HCT116 (cell line): ENCODE measurements at regions of chr3 and their contacts with region 1.

Region 1: DNA sequence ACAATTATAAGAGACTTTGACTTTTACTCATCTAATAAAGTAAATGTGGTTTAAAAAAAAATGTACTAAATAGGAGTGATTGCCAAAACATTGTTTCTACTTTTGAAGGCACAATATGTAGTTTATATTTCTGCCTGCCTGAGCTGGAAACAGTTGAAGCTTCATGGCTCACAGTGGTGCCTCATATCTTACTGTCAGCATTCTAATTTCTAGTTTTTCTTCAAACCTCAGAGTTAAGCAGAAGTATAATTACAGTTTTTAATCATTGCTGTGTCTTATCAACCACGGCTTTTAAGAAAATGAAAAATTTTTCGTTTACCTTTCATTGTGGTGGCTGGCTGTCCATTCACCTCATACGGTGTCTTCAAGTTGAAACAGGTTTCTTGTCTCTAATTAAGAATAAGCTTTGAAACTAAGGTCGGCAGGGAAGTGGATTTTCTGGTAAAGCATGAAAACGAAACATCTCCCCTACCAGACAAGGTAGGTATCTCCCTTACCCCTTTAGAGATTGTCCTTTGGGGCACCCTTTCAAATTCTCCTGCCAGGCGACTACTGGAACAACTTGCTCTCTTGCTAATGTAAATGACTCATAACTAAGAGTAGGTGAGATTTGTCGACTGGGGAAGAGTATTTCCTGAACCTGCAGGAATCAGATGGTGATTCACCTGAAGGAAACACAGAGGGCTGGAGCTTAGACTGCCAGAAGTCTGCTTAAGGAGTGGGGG is at the start of gene GPR87:
- DNase-seq: peak; percentile 88
- ATAC-seq: peak; percentile 97
- H3K4me3 ChIP-seq: peak within 1 kb of the TSS; percentile 25 to 53
- H3K27ac ChIP-seq: peak within 1 kb of the TSS; percentile 66; the same call in 1 of the 2 replicates
- H3K4me1 ChIP-seq: peaks cover 44 to 52% of the 10 kb centered on the region in 2 experiments
- H3K27me3 ChIP-seq: no peaks in the 10 kb centered on the region
- CTCF ChIP-seq: no peak
- POLR2A ChIP-seq: no peak
- RAD21 ChIP-seq: peak; percentile 13; the same call in 1 of the 2 replicates
- total RNA-seq, gene GPR87: 3.8 TPM

Region 2: GRCh38 chr3:151327571-151328198 is 11.3 kb after region 1 on chr3:
- CTCF ChIA-PET with region 1: interaction called, 10 read pairs
- POLR2A ChIA-PET with region 1: no interaction called
- RAD21 ChIA-PET with region 1: no interaction called
- intact Hi-C with region 1: no loop called
- DNase-seq: no peak
- ATAC-seq: peak; percentile 60
- H3K4me3 ChIP-seq: no peak overlapping the region
- H3K27ac ChIP-seq: no peak overlapping the region
- H3K4me1 ChIP-seq: peaks cover 15 to 22% of the 10 kb centered on the region in 2 experiments
- H3K27me3 ChIP-seq: no peaks in the 10 kb centered on the region
- CTCF ChIP-seq: peak; percentile 43 to 73 (median 63); a peak in 4 of 6 replicates
- POLR2A ChIP-seq: no peak
- RAD21 ChIP-seq: peak; percentile 66

Region 3: GRCh38 chr3:152128356-152128755 is 811.9 kb after region 1 on chr3:
- CTCF ChIA-PET with region 1: no interaction called
- POLR2A ChIA-PET with region 1: no interaction called
- RAD21 ChIA-PET with region 1: no interaction called
- intact Hi-C with region 1: no loop called
- DNase-seq: no peak
- ATAC-seq: no peak
- H3K4me3 ChIP-seq: no peak overlapping the region
- H3K27ac ChIP-seq: no peak overlapping the region
- H3K4me1 ChIP-seq: peaks cover 0 to 5% of the 10 kb centered on the region in 2 experiments; a peak in 1 of 4 replicates
- H3K27me3 ChIP-seq: no peaks in the 10 kb centered on the region
- CTCF ChIP-seq: no peak
- POLR2A ChIP-seq: no peak
- RAD21 ChIP-seq: no peak